ENCODE measurements at regions of chr17 and their contacts with region 1.

Region 1: DNA sequence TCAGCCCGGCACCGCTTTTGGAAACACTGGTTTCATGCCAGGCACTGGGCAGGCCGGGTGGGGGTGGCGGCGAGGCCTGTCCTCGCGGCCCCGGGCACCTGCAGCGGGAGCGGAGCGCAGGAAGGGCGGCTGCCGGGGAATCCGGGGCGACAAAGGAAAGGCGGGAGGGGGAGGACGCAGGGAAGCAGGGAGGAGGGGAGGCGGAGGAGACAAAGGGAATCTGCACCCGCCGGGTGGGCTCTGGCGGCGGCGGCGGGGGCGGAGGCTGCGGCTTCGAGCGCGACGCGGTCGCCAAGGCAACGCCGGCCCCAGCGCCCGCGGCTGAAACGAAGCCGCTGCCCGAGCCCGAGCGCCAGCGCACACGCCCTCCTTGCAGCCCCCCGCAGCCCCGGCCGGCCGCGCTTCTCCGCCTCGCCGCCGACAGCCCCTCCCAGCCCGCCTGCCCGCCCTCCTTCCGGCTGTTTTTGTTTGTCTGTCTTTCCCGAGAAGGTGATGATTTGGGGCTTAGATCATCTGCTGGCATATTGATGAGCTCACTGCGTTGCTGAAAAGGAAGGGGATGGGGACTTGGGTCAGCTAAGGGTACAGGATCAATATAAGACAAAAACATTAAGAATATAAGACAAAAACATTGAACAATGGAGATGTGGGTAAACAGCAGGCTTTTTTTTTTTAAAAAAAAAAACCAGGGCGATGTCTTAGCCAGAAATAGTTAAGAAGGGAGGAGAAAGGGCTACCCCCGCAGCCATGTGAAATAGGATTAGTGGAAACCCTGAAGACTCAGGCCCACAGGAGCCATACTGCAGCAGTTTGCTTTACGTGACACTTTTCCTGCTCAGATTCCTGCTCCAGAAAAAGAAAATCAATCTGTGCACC is 32.7 kb downstream of the CDK5R1 start:
- DNase-seq: peak; percentile 52
- ATAC-seq: peak; percentile 93
- H3K4me3 ChIP-seq: peak overlapping the region; percentile 67
- H3K27ac ChIP-seq: no peak overlapping the region
- H3K4me1 ChIP-seq: peaks cover 6% of the 10 kb centered on the region; the same call in 1 of the 2 replicates
- H3K27me3 ChIP-seq: no peaks in the 10 kb centered on the region
- CTCF ChIP-seq: no peak

Region 2: GRCh38 chr17:32609085-32609484 is 89.6 kb after region 1 on chr17:
- CTCF ChIA-PET with region 1: no interaction called
- POLR2A ChIA-PET with region 1: no interaction called
- intact Hi-C with region 1: no loop called
- DNase-seq: peak; percentile 66
- ATAC-seq: peak; percentile 56
- H3K4me3 ChIP-seq: no peak overlapping the region
- H3K27ac ChIP-seq: no peak overlapping the region
- H3K4me1 ChIP-seq: no peaks in the 10 kb centered on the region
- H3K27me3 ChIP-seq: no peaks in the 10 kb centered on the region
- CTCF ChIP-seq: peak; percentile 61

Region 3: GRCh38 chr17:32627239-32627996 is 108.0 kb after region 1 on chr17:
- CTCF ChIA-PET with region 1: no interaction called
- POLR2A ChIA-PET with region 1: no interaction called
- intact Hi-C with region 1: no loop called
- DNase-seq: peak; percentile 7
- ATAC-seq: peak; percentile 54
- H3K4me3 ChIP-seq: no peak overlapping the region
- H3K27ac ChIP-seq: no peak overlapping the region
- H3K4me1 ChIP-seq: peaks cover 10% of the 10 kb centered on the region; the same call in 1 of the 2 replicates
- H3K27me3 ChIP-seq: no peaks in the 10 kb centered on the region
- CTCF ChIP-seq: no peak

Region 4: GRCh38 chr17:32671896-32672295 is 152.4 kb after region 1 on chr17:
- CTCF ChIA-PET with region 1: no interaction called
- POLR2A ChIA-PET with region 1: interaction called, 12 read pairs
- intact Hi-C with region 1: no loop called
- DNase-seq: peak; percentile 9
- ATAC-seq: no peak
- H3K4me3 ChIP-seq: no peak overlapping the region
- H3K27ac ChIP-seq: no peak overlapping the region
- H3K4me1 ChIP-seq: no peaks in the 10 kb centered on the region
- H3K27me3 ChIP-seq: no peaks in the 10 kb centered on the region
- CTCF ChIP-seq: no peak

Measured in PC-3 (cell line).